ENCODE measurements at regions of chr19 and their contacts with region 1.

Region 1: GRCh38 chr19:21202865-21203494 is 61.1 kb downstream of the ZNF431 start:
- DNase-seq: no peak
- ATAC-seq: no peak
- H3K4me3 ChIP-seq: no peak overlapping the region
- H3K27ac ChIP-seq: no peak overlapping the region
- H3K4me1 ChIP-seq: no peaks in the 10 kb centered on the region
- H3K27me3 ChIP-seq: no peaks in the 10 kb centered on the region
- CTCF ChIP-seq: peak; percentile 22 to 51 (median 30)
- POLR2A ChIP-seq: no peak

Region 2: DNA sequence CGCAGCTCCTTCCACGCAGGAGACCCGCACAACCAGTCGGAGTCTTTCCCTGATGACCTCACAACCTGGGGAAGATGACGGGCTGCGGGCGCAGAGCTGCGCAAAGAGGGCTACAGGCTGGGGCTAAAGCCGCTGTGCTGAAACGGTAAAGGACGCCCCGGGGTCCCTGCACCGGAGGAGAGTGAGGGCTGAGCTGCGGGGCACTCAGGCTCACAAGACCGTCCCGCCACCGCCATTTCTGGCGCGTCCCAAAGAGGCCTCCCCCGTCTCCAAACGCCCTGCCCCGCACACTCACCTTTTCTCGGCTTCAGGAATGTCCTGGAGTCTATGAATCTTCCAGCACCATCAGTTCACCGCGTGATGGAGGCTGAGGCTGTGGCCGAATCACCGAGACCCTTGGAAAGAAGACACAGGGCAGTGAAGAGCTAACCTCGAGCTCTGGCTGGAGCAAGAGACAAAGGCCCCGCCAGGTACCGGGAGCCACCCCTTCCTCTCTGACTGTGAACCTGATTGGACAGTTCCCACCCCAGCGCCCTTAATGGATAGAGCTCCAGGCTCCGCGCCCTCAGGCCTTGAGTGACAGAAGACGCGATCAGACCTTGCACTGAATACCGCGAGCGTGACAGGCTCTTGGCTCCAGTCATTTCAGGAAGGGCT is 260.6 kb after region 1 on chr19:
- in situ Hi-C with region 1: no loop called
- intact Hi-C with region 1: no loop called
- DNase-seq: no peak
- ATAC-seq: no peak
- H3K4me3 ChIP-seq: no peak overlapping the region
- H3K27ac ChIP-seq: no peak overlapping the region
- H3K4me1 ChIP-seq: no peaks in the 10 kb centered on the region
- H3K27me3 ChIP-seq: peaks cover 0 to 7% (median 0%) of the 10 kb centered on the region in 3 donors
- CTCF ChIP-seq: no peak
- POLR2A ChIP-seq: no peak

Region 3: GRCh38 chr19:21482863-21483276 is 279.9 kb after region 1 on chr19:
- in situ Hi-C with region 1: no loop called
- intact Hi-C with region 1: loop called (anchors 10 kb)
- DNase-seq: peak in 1 of 2 donors; percentile 68
- ATAC-seq: peak in 1 of 2 donors; percentile 70
- H3K4me3 ChIP-seq: peak overlapping the region in 1 of 4 donors; percentile 13
- H3K27ac ChIP-seq: peak overlapping the region in 2 of 4 donors; percentile 14 to 53
- H3K4me1 ChIP-seq: no peaks in the 10 kb centered on the region
- H3K27me3 ChIP-seq: no peaks in the 10 kb centered on the region
- CTCF ChIP-seq: peak; percentile 42 to 73 (median 51)
- POLR2A ChIP-seq: no peak

Region 4: GRCh38 chr19:21698215-21698614 is 495.2 kb after region 1 on chr19:
- in situ Hi-C with region 1: no loop called
- intact Hi-C with region 1: loop called (anchors 10 kb)
- DNase-seq: no peak
- ATAC-seq: peak in 1 of 2 donors; percentile 49
- H3K4me3 ChIP-seq: no peak overlapping the region
- H3K27ac ChIP-seq: no peak overlapping the region
- H3K4me1 ChIP-seq: no peaks in the 10 kb centered on the region
- H3K27me3 ChIP-seq: no peaks in the 10 kb centered on the region
- CTCF ChIP-seq: peak in 4 of 5 experiments; percentile 24 to 61 (median 48)
- POLR2A ChIP-seq: no peak